ENCODE measurements at regions of chr9 and their contacts with region 1.

Region 1: DNA sequence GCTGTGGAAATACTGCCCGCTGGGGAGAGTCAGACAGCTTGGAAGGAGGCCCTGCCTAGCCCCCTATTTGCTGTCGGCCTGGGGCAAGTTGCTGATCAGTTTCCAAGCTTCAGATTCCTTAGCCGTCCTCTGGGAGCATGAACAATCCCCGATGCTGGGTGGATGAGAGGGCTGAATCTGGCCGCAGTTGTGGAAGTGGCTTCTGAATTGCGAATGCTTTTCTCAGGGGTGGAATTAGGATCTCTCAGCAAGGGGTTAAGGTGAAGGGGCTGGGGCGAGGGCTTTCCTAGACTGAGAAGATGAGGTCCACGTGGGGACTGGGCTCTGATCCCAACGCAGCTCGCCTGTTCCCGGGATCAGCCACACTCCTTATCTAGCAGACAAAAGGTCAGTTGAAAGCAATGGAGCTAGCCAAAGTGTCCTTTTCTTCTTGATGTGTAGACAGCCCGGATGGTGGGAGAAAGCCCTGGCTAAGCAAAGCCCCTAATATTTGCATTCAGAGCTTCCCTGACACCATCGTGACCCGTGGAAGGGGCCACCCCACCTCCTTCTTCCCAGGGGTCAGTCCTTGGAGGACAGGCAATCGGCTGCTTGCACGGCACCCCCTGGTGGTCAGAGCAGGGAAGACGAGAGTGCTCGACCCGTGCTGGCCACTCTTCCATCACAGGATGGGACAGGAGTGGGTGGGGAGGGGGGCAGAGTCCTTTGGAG is 54.9 kb downstream of the COL15A1 start:
- DNase-seq: peak; percentile 77 to 85 (median 84)
- ATAC-seq: peak; percentile 87
- H3K4me3 ChIP-seq: no peak overlapping the region
- H3K4me1 ChIP-seq: no peaks in the 10 kb centered on the region
- CTCF ChIP-seq: peak; percentile 67

Region 2: GRCh38 chr9:98860871-98861293 is 137.7 kb before region 1 on chr9:
- intact Hi-C with region 1: loop called (anchors 5 to 10 kb)
- DNase-seq: peak in 1 of 3 donors; percentile 36
- ATAC-seq: peak; percentile 55
- H3K4me3 ChIP-seq: no peak overlapping the region
- H3K4me1 ChIP-seq: no peaks in the 10 kb centered on the region
- CTCF ChIP-seq: no peak

Region 3: GRCh38 chr9:99130069-99130468 is 131.5 kb after region 1 on chr9:
- intact Hi-C with region 1: loop called in 1 of 2 experiments (anchors 10 kb)
- DNase-seq: no peak
- ATAC-seq: peak; percentile 19
- H3K4me3 ChIP-seq: no peak overlapping the region
- H3K4me1 ChIP-seq: no peaks in the 10 kb centered on the region
- CTCF ChIP-seq: no peak

Measured in mucosa of descending colon (tissue), 3 donors.